Activated CD4-positive, alpha-beta memory T cell treated with anti-CD3 and anti-CD28 coated beads for 36 hours (primary cell): ENCODE measurements at regions of chr5 and their contacts with region 1.

Region 1: GRCh38 chr5:157219491-157220271 is 39.0 kb downstream of the ITK start:
- DNase-seq: peak; percentile 58
- H3K4me3 Mint-ChIP-seq: peak overlapping the region; percentile 58
- H3K27ac Mint-ChIP-seq: peak overlapping the region; percentile 98
- H3K4me1 Mint-ChIP-seq: peaks cover 86% of the 10 kb centered on the region
- H3K27me3 Mint-ChIP-seq: no peaks in the 10 kb centered on the region

Region 2: DNA sequence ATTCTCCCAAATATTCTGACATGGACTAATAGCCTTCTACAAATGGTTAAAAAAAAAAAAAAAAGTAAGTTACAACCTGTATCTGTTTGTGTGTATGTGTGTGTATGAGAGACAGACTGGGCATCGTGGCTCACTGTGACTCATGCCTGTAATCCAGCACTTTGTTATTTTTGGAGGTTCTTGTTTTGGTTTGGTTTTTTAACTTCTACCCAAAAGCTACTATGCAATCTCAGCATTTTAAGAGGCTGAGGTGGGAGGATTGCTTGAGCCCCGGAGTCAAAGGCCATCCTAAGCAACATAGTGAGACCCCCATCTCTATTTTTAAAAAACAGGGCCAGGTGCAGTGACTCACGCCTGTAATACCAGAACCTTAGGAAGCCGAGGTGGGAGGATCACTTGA is 143.1 kb before region 1 on chr5:
- CTCF ChIA-PET with region 1: no interaction called
- POLR2A ChIA-PET with region 1: no interaction called
- intact Hi-C with region 1: no loop called
- DNase-seq: peak; percentile 22
- H3K4me3 Mint-ChIP-seq: no peak overlapping the region
- H3K27ac Mint-ChIP-seq: no peak overlapping the region
- H3K4me1 Mint-ChIP-seq: peaks cover 22% of the 10 kb centered on the region
- H3K27me3 Mint-ChIP-seq: no peaks in the 10 kb centered on the region

Region 3: DNA sequence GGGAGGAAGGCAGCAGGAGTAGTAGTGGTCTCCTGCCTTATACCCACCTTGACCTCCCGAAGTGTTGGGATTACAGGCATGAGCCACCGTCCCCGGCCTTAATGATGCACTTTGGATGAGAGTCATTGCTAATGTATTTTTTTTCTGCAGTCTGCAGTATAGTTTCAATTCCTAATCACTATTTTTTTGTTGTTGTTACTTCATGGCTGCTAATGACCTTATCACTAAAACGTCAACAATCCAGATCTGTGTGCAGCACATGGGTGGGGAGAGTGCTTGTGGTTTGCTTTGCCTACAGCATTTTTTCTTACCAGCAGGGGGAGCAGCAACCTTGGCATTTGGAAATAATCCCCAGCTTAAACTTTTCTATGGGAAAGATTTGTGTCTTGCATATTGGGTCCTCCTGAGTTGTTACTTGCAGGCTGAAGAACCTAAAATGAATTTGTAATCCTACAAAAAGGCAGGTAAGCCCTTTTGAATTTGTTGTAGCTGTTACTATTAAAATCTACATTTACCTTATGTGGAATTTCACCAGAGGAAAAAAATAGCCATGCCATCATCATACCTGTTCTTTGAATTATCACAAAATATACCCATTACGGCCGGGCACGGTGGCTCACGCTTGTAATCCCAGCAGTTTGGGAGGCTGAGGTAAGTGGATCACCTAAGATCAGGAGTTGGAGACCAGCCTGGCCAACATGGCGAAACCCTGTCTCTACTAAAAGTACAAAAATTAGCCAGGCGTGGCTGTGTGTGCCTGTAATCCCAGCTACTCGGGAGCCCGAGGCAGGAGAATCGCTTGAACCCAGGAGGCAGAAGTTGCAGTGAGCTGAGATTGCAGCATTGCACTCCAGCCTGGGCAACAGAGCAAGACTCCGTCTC is 70.7 kb before region 1 on chr5:
- CTCF ChIA-PET with region 1: interaction called, 11 read pairs
- POLR2A ChIA-PET with region 1: no interaction called
- intact Hi-C with region 1: loop called (anchors 1 kb)
- DNase-seq: peak; percentile 87
- H3K4me3 Mint-ChIP-seq: peak overlapping the region; percentile 3
- H3K27ac Mint-ChIP-seq: peak overlapping the region; percentile 68
- H3K4me1 Mint-ChIP-seq: peaks cover 47% of the 10 kb centered on the region
- H3K27me3 Mint-ChIP-seq: no peaks in the 10 kb centered on the region

Region 4: GRCh38 chr5:157172403-157172802 is 47.3 kb before region 1 on chr5:
- CTCF ChIA-PET with region 1: interaction called, 4 read pairs
- POLR2A ChIA-PET with region 1: interaction called, 368 read pairs
- intact Hi-C with region 1: loop called (anchors 1 kb)
- DNase-seq: peak; percentile 96
- H3K4me3 Mint-ChIP-seq: peak overlapping the region; percentile 68
- H3K27ac Mint-ChIP-seq: peak overlapping the region; percentile 95
- H3K4me1 Mint-ChIP-seq: peaks cover 83% of the 10 kb centered on the region
- H3K27me3 Mint-ChIP-seq: no peaks in the 10 kb centered on the region

Region 5: GRCh38 chr5:157189223-157189622 is 30.5 kb before region 1 on chr5:
- CTCF ChIA-PET with region 1: interaction called, 18 read pairs
- POLR2A ChIA-PET with region 1: interaction called, 368 read pairs
- intact Hi-C with region 1: loop called (anchors 1 kb)
- DNase-seq: peak; percentile 76
- H3K4me3 Mint-ChIP-seq: peak overlapping the region; percentile 99
- H3K27ac Mint-ChIP-seq: peak overlapping the region; percentile 100
- H3K4me1 Mint-ChIP-seq: peaks cover 75% of the 10 kb centered on the region
- H3K27me3 Mint-ChIP-seq: no peaks in the 10 kb centered on the region

Region 6: DNA sequence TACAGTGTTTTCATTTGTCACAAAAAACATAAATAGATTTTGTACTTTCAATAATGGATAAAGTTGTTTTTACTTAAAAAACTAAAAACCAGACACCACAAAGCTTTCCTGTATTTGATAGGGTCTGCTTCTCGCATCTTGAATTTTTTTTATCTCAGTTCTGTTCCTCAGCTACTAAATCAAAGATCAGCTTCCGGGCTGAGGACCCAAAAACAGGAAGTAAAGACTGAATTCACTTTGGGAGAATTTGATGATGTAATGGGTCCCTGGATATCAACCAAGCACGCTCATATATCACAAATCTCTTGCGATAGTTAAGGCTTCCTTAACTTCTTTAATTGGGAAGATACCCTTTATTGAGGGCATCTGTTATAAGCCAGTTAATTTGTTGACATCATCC is 14.9 kb before region 1 on chr5:
- CTCF ChIA-PET with region 1: interaction called, 5 read pairs
- POLR2A ChIA-PET with region 1: interaction called, 368 read pairs
- intact Hi-C with region 1: no loop called
- DNase-seq: no peak
- H3K4me3 Mint-ChIP-seq: peak overlapping the region; percentile 43
- H3K27ac Mint-ChIP-seq: peak overlapping the region; percentile 95
- H3K4me1 Mint-ChIP-seq: peaks cover 88% of the 10 kb centered on the region
- H3K27me3 Mint-ChIP-seq: no peaks in the 10 kb centered on the region

Region 7: GRCh38 chr5:157253547-157253946 is 33.9 kb after region 1 on chr5:
- CTCF ChIA-PET with region 1: interaction called, 14 read pairs
- POLR2A ChIA-PET with region 1: interaction called, 9 read pairs
- intact Hi-C with region 1: loop called (anchors 1 kb)
- DNase-seq: no peak
- H3K4me3 Mint-ChIP-seq: peak overlapping the region; percentile 39
- H3K27ac Mint-ChIP-seq: peak overlapping the region; percentile 96
- H3K4me1 Mint-ChIP-seq: peaks cover 92% of the 10 kb centered on the region
- H3K27me3 Mint-ChIP-seq: no peaks in the 10 kb centered on the region

Region 8: GRCh38 chr5:157596487-157596886 is 376.8 kb after region 1 on chr5:
- CTCF ChIA-PET with region 1: no interaction called
- POLR2A ChIA-PET with region 1: no interaction called
- intact Hi-C with region 1: no loop called
- DNase-seq: peak; percentile 83
- H3K4me3 Mint-ChIP-seq: peak overlapping the region; percentile 11
- H3K27ac Mint-ChIP-seq: peak overlapping the region; percentile 91
- H3K4me1 Mint-ChIP-seq: peaks cover 95% of the 10 kb centered on the region
- H3K27me3 Mint-ChIP-seq: no peaks in the 10 kb centered on the region

Region 9: GRCh38 chr5:158349987-158350386 is 1130.3 kb after region 1 on chr5:
- CTCF ChIA-PET with region 1: no interaction called
- POLR2A ChIA-PET with region 1: no interaction called
- intact Hi-C with region 1: no loop called
- DNase-seq: no peak
- H3K4me3 Mint-ChIP-seq: no peak overlapping the region
- H3K27ac Mint-ChIP-seq: no peak overlapping the region
- H3K4me1 Mint-ChIP-seq: peaks cover 4% of the 10 kb centered on the region
- H3K27me3 Mint-ChIP-seq: peaks cover 7% of the 10 kb centered on the region